Breast epithelium (tissue), 4 donors: ENCODE measurements at regions of chr12 and their contacts with region 1.

Region 1: GRCh38 chr12:3885277-3886094 is 12.3 kb upstream of the PARP11 start:
- DNase-seq: no peak
- H3K4me3 ChIP-seq: peak overlapping the region; percentile 43 to 58 (median 48)
- H3K27ac ChIP-seq: peak overlapping the region; percentile 75 to 80
- H3K4me1 ChIP-seq: no peaks in the 10 kb centered on the region
- H3K27me3 ChIP-seq: no peaks in the 10 kb centered on the region
- CTCF ChIP-seq: peak; percentile 83 to 91 (median 90)
- POLR2A ChIP-seq: no peak

Region 2: GRCh38 chr12:4287325-4288211 is 402.1 kb after region 1 on chr12:
- intact Hi-C with region 1: loop called (anchors 10 kb)
- DNase-seq: no peak
- H3K4me3 ChIP-seq: no peak overlapping the region
- H3K27ac ChIP-seq: peak overlapping the region in 1 of 2 donors; percentile 32
- H3K4me1 ChIP-seq: no peaks in the 10 kb centered on the region
- H3K27me3 ChIP-seq: peaks cover 0 to 5% of the 10 kb centered on the region in 2 donors
- CTCF ChIP-seq: no peak
- POLR2A ChIP-seq: no peak

Region 3: GRCh38 chr12:4379405-4379804 is 493.9 kb after region 1 on chr12 and contains the start of gene FGF23:
- intact Hi-C with region 1: no loop called
- DNase-seq: no peak
- H3K4me3 ChIP-seq: no peak within 1 kb of the TSS
- H3K27ac ChIP-seq: no peak within 1 kb of the TSS
- H3K4me1 ChIP-seq: no peaks in the 10 kb centered on the region
- H3K27me3 ChIP-seq: peaks cover 0 to 10% of the 10 kb centered on the region in 2 donors
- CTCF ChIP-seq: no peak
- POLR2A ChIP-seq: no peak
- total RNA-seq, gene FGF23: not detected